Mammary epithelial cell (primary cell): ENCODE measurements at regions of chr1 and their contacts with region 1.

Region 1: DNA sequence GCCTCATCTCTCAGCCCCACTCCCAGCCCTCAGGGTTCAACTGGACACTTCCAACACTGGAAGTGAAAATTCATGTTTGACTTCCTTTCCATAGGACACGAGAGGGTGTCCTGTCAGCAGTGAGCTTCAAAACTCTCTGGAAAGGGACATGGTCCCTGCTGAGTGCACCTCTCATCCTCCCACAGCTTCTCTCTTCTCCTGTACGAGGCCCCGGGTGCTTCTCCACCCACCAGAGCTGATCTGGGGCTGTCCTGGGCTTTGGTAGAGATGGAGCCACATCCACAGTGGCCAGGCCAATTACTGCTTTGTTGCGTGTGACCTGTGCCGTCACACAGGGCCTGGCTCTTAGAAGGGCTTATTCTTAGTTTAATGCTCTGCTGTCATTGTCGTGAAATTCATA is 182.3 kb downstream of the RRAGC start:
- DNase-seq: no peak
- H3K4me3 ChIP-seq: no peak overlapping the region
- H3K27ac ChIP-seq: no peak overlapping the region
- H3K4me1 ChIP-seq: no peaks in the 10 kb centered on the region
- H3K27me3 ChIP-seq: no peaks in the 10 kb centered on the region
- CTCF ChIP-seq: no peak

Region 2: DNA sequence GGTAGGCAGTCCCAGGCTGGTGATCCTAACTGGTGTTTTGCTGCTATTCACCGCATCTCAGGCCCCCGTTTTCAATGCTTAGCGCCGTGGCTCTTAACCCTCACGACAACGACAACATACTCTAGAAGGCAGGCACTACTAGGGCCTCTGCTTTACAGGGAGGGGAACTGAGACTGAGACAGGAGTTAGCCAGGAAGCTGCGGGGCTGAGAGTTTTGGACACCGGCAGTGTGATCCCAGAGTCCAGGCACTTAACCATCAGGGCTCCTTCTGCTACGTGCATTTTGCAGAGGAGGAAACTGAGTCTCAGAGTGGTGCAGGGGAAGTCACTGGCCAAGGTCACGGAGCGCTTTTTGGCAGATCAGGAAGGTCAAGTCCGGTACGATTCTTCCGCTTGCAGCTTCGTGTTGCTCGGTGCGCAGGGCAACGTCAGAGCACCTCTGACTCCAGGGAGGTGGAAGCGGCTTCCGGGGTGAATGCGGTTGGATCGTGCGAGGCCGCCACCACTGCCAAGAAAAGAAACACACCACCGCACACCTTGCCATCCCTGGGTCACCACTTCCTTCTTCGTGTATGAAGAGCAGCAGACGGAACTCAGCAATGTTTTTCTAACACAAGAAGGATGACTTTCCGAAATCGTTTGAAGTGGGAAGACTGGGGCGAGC is 118.0 kb before region 1 on chr1:
- CTCF ChIA-PET with region 1: no interaction called
- dilution Hi-C with region 1: loop called (anchors 5 kb)
- in situ Hi-C with region 1: no loop called
- intact Hi-C with region 1: no loop called
- DNase-seq: no peak
- H3K4me3 ChIP-seq: no peak overlapping the region
- H3K27ac ChIP-seq: no peak overlapping the region
- H3K4me1 ChIP-seq: no peaks in the 10 kb centered on the region
- H3K27me3 ChIP-seq: peaks cover 8% of the 10 kb centered on the region
- CTCF ChIP-seq: no peak